ENCODE measurements at regions of chr20 and their contacts with region 1.

Region 1: DNA sequence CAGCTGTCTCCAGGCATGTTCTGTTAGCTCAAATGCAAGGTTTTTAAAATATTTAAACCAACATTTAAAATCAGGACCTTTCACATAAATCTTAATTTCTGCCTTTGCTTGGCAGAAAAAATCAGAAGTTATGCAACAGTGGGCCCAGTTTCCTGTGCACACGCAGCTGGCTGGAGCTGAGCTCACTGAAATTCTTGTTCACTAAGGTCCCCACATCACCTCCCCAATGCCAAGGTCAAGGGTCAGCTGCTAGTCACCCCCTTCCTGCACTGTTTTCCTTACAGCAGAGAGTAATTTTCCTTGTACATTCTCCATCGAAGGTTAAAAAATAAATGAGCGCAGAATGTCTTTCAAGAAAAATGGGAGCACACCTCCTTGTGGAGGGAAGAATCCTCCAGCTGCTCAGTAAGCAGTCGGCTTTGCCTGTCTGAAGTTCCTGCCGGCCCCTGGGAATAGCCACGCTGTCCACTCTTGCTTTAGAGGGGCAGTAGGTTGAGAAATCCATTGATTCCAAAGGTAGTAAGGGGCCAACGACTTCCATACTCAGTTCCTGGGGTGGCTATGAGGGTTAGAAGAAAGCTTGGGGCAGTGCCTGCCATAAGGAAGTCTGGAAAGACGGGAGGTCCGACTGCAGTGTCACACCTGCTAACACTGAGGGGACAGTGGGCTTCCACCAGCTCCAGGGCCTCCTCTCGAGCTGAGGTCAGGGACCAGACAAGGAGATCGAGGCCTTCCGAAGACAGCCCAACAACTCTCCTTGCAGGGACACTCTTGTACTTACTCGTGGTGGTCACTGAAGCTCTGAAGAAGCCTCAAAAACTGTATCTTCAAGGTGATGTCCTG is 56.8 kb downstream of the MYH7B start:
- DNase-seq: no peak
- H3K4me3 Mint-ChIP-seq: no peak overlapping the region
- H3K27ac Mint-ChIP-seq: no peak overlapping the region
- H3K4me1 Mint-ChIP-seq: peaks cover 5% of the 10 kb centered on the region
- H3K27me3 Mint-ChIP-seq: no peaks in the 10 kb centered on the region

Region 2: GRCh38 chr20:34970193-34970840 is 42.1 kb before region 1 on chr20:
- CTCF ChIA-PET with region 1: no interaction called
- POLR2A ChIA-PET with region 1: no interaction called
- DNase-seq: no peak
- H3K4me3 Mint-ChIP-seq: no peak overlapping the region
- H3K27ac Mint-ChIP-seq: no peak overlapping the region
- H3K4me1 Mint-ChIP-seq: no peaks in the 10 kb centered on the region
- H3K27me3 Mint-ChIP-seq: no peaks in the 10 kb centered on the region

Region 3: DNA sequence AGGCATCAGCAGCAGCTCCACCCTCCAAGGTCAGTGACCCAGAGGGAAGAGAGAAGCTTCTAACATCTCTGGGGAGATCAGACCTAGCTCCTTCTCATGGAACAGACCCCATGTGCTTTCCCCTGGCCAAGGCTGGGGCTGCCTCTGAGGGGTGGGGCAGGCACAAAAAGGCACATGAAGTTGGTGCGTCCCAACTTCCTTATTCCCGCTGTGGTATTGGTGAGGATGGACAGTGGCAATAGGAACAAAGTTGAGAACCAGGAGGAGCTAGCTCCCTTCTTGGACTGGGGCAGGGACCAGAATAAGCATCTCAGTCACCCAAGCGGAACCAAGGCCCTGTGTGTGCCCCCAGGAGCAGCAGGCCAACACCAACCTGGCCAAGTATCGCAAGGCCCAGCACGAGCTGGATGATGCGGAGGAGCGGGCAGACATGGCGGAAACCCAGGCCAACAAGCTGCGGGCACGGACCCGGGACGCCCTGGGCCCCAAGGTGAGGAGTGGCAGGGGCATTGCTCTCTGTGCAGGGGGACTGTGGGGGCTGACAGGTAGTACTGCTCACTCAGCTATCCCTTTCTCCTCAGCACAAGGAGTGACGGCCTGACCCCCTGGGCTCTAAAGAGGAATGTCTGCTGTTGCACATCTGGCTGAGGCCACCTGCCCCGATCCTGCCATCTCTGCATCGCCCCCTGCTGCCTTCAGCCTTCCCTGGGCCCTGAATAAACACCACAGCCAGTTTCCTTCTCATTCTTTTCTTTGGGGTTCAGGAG is 10.7 kb before region 1 on chr20:
- CTCF ChIA-PET with region 1: interaction called, 11 read pairs
- POLR2A ChIA-PET with region 1: no interaction called
- DNase-seq: peak; percentile 15
- H3K4me3 Mint-ChIP-seq: no peak overlapping the region
- H3K27ac Mint-ChIP-seq: no peak overlapping the region
- H3K4me1 Mint-ChIP-seq: no peaks in the 10 kb centered on the region
- H3K27me3 Mint-ChIP-seq: no peaks in the 10 kb centered on the region